ENCODE measurements at regions of chr2 and their contacts with region 1.

Region 1: DNA sequence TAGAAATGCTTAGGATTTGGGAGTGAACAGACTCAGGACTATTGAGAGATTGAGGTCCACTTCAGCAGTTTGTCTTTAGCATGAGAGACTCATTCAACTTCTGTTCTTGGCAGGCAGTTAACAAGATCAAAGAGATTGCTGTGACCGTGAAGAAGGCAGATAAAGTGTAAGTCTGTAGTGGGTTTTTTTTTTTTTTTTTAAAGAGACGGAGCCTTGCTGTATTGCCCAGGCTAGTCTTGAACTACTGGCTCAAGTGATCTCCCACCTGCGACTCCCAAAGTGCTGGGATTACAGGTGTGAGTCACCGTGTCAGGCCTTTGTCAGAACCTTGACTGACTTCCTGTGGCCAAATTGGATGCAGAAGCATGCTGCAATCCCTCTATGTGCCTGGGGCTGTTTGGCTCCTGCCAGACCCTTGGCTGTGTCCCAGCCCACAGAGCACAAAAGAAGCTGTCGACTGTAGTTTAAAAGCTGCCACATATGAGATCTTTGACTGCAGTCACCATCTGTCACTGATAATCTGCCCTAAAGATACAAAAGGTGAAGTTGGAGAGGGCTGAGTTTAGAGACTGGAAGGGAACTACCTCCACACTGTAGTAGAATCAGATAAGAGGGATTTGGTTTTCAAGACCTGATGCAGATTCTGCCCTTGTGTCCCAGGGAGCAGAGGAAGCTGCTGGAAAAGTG is 9.9 kb downstream of the CCT7 start:
- DNase-seq: no peak
- ATAC-seq: no peak
- H3K4me3 Mint-ChIP-seq: no peak overlapping the region
- H3K27ac Mint-ChIP-seq: no peak overlapping the region
- H3K4me1 Mint-ChIP-seq: peaks cover 1% of the 10 kb centered on the region
- H3K27me3 Mint-ChIP-seq: no peaks in the 10 kb centered on the region
- CTCF ChIP-seq: no peak

Region 2: GRCh38 chr2:73268830-73269685 is 25.0 kb after region 1 on chr2:
- CTCF ChIA-PET with region 1: no interaction called
- POLR2A ChIA-PET with region 1: no interaction called
- intact Hi-C with region 1: loop called (anchors 2 kb)
- DNase-seq: peak; percentile 54
- ATAC-seq: peak; percentile 92
- H3K4me3 Mint-ChIP-seq: peak overlapping the region; percentile 44
- H3K27ac Mint-ChIP-seq: no peak overlapping the region
- H3K4me1 Mint-ChIP-seq: peaks cover 18% of the 10 kb centered on the region
- H3K27me3 Mint-ChIP-seq: no peaks in the 10 kb centered on the region
- CTCF ChIP-seq: no peak